OCI-LY7 (cell line): ENCODE measurements at regions of chr18 and their contacts with region 1.

Region 1: DNA sequence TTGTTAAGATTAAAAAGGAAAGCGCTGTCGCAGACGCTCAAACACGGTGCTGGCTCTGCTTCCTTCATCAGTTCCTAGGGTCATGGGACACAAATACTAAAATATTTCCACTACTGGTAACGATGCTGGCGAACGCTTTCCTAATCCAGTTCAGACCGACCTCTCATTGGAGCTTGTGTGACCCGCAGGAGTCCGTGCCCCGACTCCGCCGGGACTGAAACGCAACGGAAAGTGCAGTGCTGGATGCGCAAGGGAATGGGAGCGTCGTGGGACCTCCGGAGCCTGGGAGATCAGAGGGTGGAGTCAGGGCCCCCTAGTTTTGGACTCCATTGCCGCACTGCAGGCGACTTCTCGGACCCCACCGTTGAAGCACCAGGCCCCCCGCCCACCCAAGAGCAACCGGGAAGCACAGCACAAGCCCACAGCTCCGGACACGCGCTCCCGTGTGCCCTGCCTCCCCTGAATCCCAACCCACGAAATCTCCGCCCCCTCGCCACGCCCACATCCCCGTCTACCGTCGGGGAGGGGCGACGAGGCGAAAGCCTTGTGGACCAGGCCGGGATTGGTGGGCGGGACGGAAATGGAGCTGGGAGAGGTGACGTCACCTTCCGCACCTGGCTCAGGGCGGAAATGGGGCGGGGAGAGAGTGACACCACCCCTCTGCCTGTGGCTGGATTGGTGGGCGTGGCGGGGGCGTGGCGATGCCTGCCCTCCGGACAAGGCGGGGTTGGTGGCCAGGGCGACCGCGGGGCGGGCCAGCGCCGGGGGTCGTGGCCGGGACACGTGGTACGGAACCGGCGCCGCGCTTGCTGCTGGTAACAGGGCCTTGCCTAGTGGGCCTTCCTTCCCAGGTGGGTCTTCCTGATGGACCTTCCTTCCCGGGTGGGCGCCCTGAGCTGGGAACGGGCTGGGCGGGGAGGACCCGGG is at the start of gene CNDP2:
- DNase-seq: peak; percentile 94
- H3K4me3 ChIP-seq: peak within 1 kb of the TSS; percentile 89
- H3K27ac ChIP-seq: peak within 1 kb of the TSS; percentile 30
- H3K4me1 ChIP-seq: peaks cover 23% of the 10 kb centered on the region
- CTCF ChIP-seq: no peak
- total RNA-seq, gene CNDP2: 28.5 and 51.5 TPM in 2 replicates

Region 2: DNA sequence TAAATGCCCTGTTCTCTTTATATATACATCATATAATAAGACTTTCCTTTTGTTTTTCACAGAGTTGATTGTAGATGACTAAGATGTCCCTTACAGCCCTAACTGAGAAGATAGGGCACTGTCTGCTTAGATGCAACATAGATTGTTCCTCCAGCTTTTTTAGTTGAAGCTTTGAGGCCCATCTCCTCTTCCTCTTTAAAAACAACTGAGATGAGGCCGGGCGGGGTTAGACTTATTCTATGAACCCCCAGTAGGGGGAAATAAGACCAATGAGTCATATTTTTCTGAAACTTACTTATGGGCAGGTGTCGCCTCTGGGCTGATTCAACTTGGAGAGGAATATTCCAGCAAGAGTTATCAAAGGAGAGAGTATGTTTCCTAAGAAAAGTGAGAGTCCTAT is 432.8 kb before region 1 on chr18:
- CTCF ChIA-PET with region 1: no interaction called
- POLR2A ChIA-PET with region 1: no interaction called
- intact Hi-C with region 1: loop called (anchors 5 kb)
- DNase-seq: peak; percentile 72
- H3K4me3 ChIP-seq: no peak overlapping the region
- H3K27ac ChIP-seq: peak overlapping the region; percentile 63
- H3K4me1 ChIP-seq: peaks cover 50% of the 10 kb centered on the region
- CTCF ChIP-seq: peak; percentile 48

Region 3: GRCh38 chr18:74196220-74197119 is 299.4 kb before region 1 on chr18:
- CTCF ChIA-PET with region 1: interaction called, 3 read pairs
- POLR2A ChIA-PET with region 1: interaction called, 4 read pairs
- intact Hi-C with region 1: loop called (anchors 2 kb)
- DNase-seq: peak; percentile 64
- H3K4me3 ChIP-seq: peak overlapping the region; percentile 50
- H3K27ac ChIP-seq: no peak overlapping the region
- H3K4me1 ChIP-seq: peaks cover 14% of the 10 kb centered on the region
- CTCF ChIP-seq: peak; percentile 88

Region 4: GRCh38 chr18:74353169-74353775 is 142.6 kb before region 1 on chr18:
- CTCF ChIA-PET with region 1: no interaction called
- POLR2A ChIA-PET with region 1: no interaction called
- intact Hi-C with region 1: loop called (anchors 5 kb)
- DNase-seq: peak; percentile 12
- H3K4me3 ChIP-seq: no peak overlapping the region
- H3K27ac ChIP-seq: no peak overlapping the region
- H3K4me1 ChIP-seq: no peaks in the 10 kb centered on the region
- CTCF ChIP-seq: peak; percentile 52

Region 5: DNA sequence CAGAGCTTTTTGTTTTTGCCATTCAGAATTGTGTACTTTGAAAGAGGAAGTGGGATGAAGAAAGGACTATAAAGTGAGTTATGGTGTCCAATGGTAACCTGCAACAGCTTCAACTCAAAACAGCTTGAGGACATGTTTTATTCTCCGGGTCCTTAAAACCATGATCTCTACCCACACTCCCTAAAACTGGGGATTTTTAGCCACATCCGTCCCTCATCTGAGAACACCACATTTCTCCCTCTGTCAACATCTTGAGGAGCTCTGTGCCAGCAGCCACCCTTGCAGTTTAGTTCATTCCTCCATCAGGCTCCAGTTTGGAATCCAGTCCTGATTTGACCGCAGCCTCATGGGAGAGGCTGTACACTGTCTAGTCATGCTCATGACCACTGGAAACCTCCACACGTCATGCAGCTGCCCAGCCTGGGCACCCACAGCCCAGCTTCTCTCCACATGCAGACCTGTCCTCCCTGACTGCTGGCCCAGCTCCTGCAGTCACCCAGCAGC is 117.6 kb before region 1 on chr18:
- CTCF ChIA-PET with region 1: no interaction called
- POLR2A ChIA-PET with region 1: no interaction called
- intact Hi-C with region 1: no loop called
- DNase-seq: no peak
- H3K4me3 ChIP-seq: no peak overlapping the region
- H3K27ac ChIP-seq: no peak overlapping the region
- H3K4me1 ChIP-seq: no peaks in the 10 kb centered on the region
- CTCF ChIP-seq: no peak

Region 6: GRCh38 chr18:74476140-74476539 is 19.7 kb before region 1 on chr18:
- CTCF ChIA-PET with region 1: no interaction called
- POLR2A ChIA-PET with region 1: no interaction called
- intact Hi-C with region 1: no loop called
- DNase-seq: no peak
- H3K4me3 ChIP-seq: no peak overlapping the region
- H3K27ac ChIP-seq: no peak overlapping the region
- H3K4me1 ChIP-seq: no peaks in the 10 kb centered on the region
- CTCF ChIP-seq: peak; percentile 43

Region 7: DNA sequence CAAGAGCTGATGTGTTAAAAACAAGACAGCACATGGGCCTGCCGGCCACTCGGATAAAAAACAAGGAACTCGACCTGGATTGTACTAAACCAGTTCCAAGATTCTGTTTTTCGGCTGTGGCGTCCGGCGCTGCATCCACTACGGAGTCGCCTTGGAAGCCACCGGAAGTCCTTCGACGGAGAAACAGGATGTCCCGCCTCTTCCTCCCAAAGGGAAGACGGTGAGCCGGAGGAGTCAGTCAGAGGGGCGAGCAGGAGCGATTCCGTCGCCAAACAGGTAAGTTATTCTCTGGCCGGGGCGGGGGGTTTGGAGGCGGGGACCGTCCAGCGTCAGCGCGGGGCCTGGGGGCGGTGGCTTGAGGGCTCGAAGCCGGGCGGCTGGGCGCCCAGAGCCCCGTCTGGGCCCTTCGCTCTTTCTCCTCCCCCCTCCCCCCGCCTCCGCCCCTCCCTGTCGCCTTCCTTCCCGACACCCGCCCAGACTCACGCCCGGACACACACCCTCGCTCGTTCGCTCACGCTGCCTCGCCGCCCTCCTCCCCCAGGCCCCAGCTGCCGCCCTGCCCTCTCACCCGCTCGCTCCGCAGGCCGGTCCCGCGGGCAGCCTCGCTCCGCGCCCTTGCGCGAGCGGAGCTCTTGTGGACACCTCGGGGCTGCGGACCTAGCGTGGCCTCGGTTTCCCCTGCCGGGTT is 102.0 kb after region 1 on chr18 and contains the start of gene ZNF407:
- CTCF ChIA-PET with region 1: no interaction called
- POLR2A ChIA-PET with region 1: no interaction called
- intact Hi-C with region 1: loop called (anchors 5 kb)
- DNase-seq: peak; percentile 83
- H3K4me3 ChIP-seq: peak within 1 kb of the TSS; percentile 77
- H3K27ac ChIP-seq: peak within 1 kb of the TSS; percentile 76
- H3K4me1 ChIP-seq: peaks cover 23% of the 10 kb centered on the region
- CTCF ChIP-seq: no peak
- total RNA-seq, gene ZNF407: 8.9 and 10.5 TPM in 2 replicates

Region 8: DNA sequence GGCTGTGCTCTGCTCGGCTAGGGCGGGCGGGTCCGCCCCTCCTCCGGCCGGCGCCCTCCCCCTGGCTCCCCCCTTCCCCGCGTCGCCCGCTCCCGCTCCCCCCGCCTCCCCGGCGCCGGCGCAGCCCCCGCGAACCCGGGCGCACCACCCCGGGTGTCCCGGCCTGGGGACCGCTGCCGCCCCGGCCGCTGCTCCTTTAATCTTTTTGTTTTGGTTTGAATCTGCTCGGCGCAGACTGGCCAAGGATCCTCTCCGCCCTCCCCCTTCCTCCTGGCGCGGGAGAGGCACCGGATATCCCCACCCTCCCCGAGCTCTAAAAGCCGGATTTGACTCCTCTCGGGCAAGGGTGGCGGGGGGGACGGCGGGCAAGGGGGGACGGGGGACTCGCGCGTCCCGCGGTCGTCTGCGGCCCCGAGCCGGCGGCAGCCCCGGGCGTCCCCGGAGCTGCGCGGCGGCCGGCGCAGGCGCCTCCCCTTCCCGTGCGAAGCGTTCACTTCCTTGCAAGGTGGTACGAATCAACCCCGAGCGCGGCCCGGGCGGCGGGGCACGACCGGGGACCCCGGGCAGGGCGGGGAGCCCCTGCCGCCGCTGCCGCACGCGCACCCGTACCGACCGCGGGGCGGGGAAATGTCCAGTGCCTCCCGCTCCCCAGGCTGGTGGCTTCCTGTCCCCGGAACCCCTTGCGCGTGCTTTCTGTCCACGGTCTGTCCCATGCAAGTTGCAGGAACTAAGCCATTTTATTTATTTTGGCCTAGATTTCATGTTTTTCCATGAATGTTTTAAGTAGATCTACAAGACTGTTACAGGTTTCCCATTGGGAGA is 713.5 kb after region 1 on chr18 and contains the start of gene PTGR3:
- CTCF ChIA-PET with region 1: no interaction called
- POLR2A ChIA-PET with region 1: no interaction called
- intact Hi-C with region 1: loop called (anchors 5 kb)
- DNase-seq: peak; percentile 70
- H3K4me3 ChIP-seq: peak within 1 kb of the TSS; percentile 86
- H3K27ac ChIP-seq: peak within 1 kb of the TSS; percentile 74
- H3K4me1 ChIP-seq: peaks cover 13% of the 10 kb centered on the region
- CTCF ChIP-seq: no peak
- total RNA-seq, gene PTGR3: 1.8 and 3.0 TPM in 2 replicates